Activated naive CD8-positive, alpha-beta T cell treated with anti-CD3 and anti-CD28 coated beads, Interleukin-2, amount 10 ng/mL, durations not matched to agents 7 days and 5 days (primary cell): ENCODE measurements at regions of chrX and their contacts with region 1.

Region 1: GRCh38 chrX:47190445-47191269 is 3.0 kb upstream of the UBA1 start:
- DNase-seq: peak; percentile 75
- ATAC-seq: peak; percentile 78
- H3K4me3 Mint-ChIP-seq: peak overlapping the region; percentile 90
- H3K27ac Mint-ChIP-seq: peak overlapping the region; percentile 95
- H3K4me1 Mint-ChIP-seq: peaks cover 20% of the 10 kb centered on the region
- H3K27me3 Mint-ChIP-seq: no peaks in the 10 kb centered on the region

Region 2: DNA sequence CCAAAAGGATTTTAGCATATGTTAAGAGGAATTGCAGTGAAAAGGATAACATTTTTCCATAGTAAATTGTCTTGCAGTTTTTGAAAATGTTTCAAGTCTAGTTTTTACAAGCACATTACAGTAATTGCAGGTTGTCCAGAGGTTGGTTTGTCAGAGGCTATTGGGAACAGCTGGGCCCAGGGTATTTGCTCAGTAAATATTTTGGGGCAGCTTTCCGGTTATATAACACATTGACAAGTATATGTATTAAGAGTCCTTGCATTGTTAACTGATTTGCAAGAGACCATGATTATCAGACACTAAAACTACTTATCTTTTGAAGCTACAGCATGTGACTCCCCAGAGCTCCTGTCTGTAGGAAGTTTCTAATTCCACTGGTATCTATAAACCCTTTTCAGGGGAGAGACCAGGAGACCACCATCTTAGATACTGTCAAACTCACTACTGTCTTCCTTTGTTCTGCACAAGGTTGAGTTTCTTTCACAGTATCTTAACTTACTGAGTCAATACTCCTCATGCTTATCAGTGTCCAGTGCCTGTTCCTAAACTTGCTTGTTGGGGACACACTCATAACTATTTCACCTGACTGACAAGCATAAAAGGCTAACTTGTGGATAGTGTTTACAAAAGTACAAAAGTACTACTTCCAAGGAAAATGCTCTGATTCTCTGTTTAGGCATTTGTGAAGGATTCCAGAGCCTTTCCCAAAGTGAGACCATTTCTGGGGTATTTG is 131.3 kb before region 1 on chrX:
- POLR2A ChIA-PET with region 1: no interaction called
- DNase-seq: no peak
- ATAC-seq: no peak
- H3K4me3 Mint-ChIP-seq: no peak overlapping the region
- H3K27ac Mint-ChIP-seq: no peak overlapping the region
- H3K4me1 Mint-ChIP-seq: no peaks in the 10 kb centered on the region
- H3K27me3 Mint-ChIP-seq: peaks cover 5% of the 10 kb centered on the region

Region 3: GRCh38 chrX:47080215-47080914 is 110.3 kb before region 1 on chrX:
- POLR2A ChIA-PET with region 1: no interaction called
- DNase-seq: no peak
- ATAC-seq: no peak
- H3K4me3 Mint-ChIP-seq: no peak overlapping the region
- H3K27ac Mint-ChIP-seq: no peak overlapping the region
- H3K4me1 Mint-ChIP-seq: no peaks in the 10 kb centered on the region
- H3K27me3 Mint-ChIP-seq: peaks cover 5% of the 10 kb centered on the region

Region 4: DNA sequence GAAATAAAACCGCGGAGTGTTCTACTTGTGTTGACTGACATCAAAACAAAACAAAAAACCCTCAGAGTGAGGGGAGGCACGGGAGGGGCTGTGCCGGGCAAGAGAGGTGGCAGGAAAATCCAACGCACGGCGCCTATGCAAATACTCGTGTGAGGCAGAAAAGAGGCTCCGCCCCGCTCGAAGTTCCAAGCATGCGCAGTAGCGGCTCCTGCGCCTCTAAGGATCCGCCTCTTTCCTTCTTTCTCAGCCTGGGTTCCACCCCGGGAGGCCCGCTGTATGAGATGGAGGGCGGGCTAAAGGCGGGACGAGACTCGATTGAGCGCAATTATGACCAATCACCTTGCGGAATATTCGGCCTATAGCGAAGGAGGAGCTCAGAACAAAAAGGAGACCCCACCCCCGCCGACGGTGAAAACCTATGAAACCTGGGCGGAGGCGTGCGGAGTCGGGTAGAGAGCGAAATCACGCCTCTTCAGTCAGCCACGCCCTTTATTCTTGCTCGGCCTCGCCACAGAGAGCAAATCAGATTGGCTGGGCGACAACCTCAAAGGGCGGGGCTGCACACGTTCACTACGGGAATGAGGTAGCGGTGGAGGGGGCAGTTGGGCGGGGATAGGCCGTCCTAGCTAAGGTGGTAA is 27.1 kb after region 1 on chrX:
- POLR2A ChIA-PET with region 1: interaction called, 12 read pairs
- DNase-seq: peak; percentile 88
- ATAC-seq: peak; percentile 84
- H3K4me3 Mint-ChIP-seq: peak overlapping the region; percentile 90
- H3K27ac Mint-ChIP-seq: peak overlapping the region; percentile 98
- H3K4me1 Mint-ChIP-seq: peaks cover 29% of the 10 kb centered on the region
- H3K27me3 Mint-ChIP-seq: no peaks in the 10 kb centered on the region